Activated naive CD4-positive, alpha-beta T cell treated with anti-CD3 and anti-CD28 coated beads, Interleukin-2, amount 10 ng/mL, durations not matched to agents 7 days and 5 days (primary cell): ENCODE measurements at regions of chr1 and their contacts with region 1.

Region 1: GRCh38 chr1:13725714-13726175 is 25.8 kb downstream of the PRDM2 start:
- DNase-seq: peak; percentile 76
- H3K4me3 Mint-ChIP-seq: no peak overlapping the region
- H3K27ac Mint-ChIP-seq: peak overlapping the region; percentile 3
- H3K4me1 Mint-ChIP-seq: peaks cover 52% of the 10 kb centered on the region
- H3K27me3 Mint-ChIP-seq: no peaks in the 10 kb centered on the region

Region 2: GRCh38 chr1:13664451-13664850 is 61.3 kb before region 1 on chr1:
- CTCF ChIA-PET with region 1: interaction called, 21 read pairs
- DNase-seq: no peak
- H3K4me3 Mint-ChIP-seq: no peak overlapping the region
- H3K27ac Mint-ChIP-seq: no peak overlapping the region
- H3K4me1 Mint-ChIP-seq: peaks cover 5% of the 10 kb centered on the region
- H3K27me3 Mint-ChIP-seq: peaks cover 18% of the 10 kb centered on the region

Region 3: DNA sequence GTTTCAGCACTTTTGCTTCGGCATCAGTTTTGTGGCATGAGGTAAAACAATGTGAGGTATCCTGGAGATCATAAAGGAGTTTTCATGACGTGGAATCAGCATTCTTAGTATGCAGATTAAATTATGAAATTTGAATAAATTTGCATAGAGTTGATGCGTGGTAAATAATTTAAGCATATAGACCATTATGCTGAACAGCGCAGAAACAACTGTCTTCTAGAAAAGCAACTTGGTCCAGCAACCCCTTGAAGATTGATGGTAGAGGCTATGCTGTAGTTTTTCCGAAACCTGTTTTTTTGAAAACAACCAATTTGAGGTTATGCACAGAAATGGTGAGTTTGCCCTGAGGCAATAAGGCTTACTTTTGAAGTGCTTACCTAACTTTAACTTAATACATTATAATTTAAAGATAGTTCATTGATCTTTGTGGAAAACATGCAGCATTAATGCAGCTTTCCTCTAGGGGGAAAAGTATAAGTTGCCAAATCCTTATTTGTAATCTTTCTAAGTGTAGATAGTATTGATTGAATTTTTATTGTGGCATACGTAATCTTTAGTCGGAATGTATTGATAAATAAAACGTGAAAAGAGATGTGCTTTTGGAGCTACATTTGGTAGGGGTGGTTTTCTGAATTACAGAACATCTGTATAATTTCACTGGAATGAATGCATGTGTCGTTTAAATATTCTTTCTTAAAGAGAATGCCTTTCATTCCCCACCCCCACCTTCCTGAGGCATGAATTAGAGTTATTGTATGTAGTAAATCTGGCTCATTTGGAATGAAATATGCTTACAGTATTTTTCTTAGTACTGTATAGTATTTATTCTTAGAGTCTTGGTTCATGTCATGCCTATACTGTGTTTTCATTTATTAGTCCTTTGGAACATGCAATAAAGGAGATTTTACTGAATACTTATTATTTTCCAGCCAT is 21.9 kb before region 1 on chr1:
- CTCF ChIA-PET with region 1: interaction called, 21 read pairs
- DNase-seq: no peak
- H3K4me3 Mint-ChIP-seq: no peak overlapping the region
- H3K27ac Mint-ChIP-seq: no peak overlapping the region
- H3K4me1 Mint-ChIP-seq: peaks cover 65% of the 10 kb centered on the region
- H3K27me3 Mint-ChIP-seq: no peaks in the 10 kb centered on the region

Region 4: DNA sequence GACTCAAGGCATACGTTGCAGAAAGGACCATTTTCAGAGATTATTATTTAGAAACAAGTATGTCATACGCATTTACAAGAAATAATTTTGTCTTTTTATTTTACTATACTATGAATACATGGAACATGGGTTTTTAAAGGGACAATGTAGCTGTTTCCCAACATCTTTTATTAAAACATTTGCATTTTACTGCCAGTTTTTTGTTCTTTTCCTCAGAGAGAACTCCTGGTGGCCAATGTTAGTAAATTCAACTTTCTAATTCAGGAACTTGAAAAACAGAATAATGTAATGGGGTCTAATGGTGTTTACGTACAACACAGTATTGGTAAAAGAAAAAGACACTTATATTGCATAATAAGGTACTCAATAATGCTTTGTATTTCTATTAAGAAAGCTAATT is 10.9 kb before region 1 on chr1:
- CTCF ChIA-PET with region 1: interaction called, 17 read pairs
- DNase-seq: no peak
- H3K4me3 Mint-ChIP-seq: no peak overlapping the region
- H3K27ac Mint-ChIP-seq: no peak overlapping the region
- H3K4me1 Mint-ChIP-seq: peaks cover 5% of the 10 kb centered on the region
- H3K27me3 Mint-ChIP-seq: no peaks in the 10 kb centered on the region

Region 5: GRCh38 chr1:13754510-13755103 is 28.9 kb after region 1 on chr1:
- CTCF ChIA-PET with region 1: interaction called, 16 read pairs
- DNase-seq: no peak
- H3K4me3 Mint-ChIP-seq: no peak overlapping the region
- H3K27ac Mint-ChIP-seq: no peak overlapping the region
- H3K4me1 Mint-ChIP-seq: peaks cover 76% of the 10 kb centered on the region
- H3K27me3 Mint-ChIP-seq: no peaks in the 10 kb centered on the region

Region 6: GRCh38 chr1:13892671-13893325 is 167.1 kb after region 1 on chr1:
- CTCF ChIA-PET with region 1: no interaction called
- DNase-seq: no peak
- H3K4me3 Mint-ChIP-seq: no peak overlapping the region
- H3K27ac Mint-ChIP-seq: no peak overlapping the region
- H3K4me1 Mint-ChIP-seq: no peaks in the 10 kb centered on the region
- H3K27me3 Mint-ChIP-seq: peaks cover 63% of the 10 kb centered on the region